ENCODE measurements at regions of chr7 and their contacts with region 1.

Region 1: GRCh38 chr7:142796608-142797385 is 26.0 kb downstream of the PRSS2 start:
- DNase-seq: peak in 2 of 5 donors; percentile 41 to 47
- H3K4me3 ChIP-seq: peak overlapping the region; percentile 84 to 85
- H3K4me3 Mint-ChIP-seq: peak overlapping the region; percentile 93 to 100 (median 99)
- H3K27ac ChIP-seq: peak overlapping the region; percentile 99
- H3K27ac Mint-ChIP-seq: peak overlapping the region; percentile 98 to 100 (median 100)
- H3K4me1 ChIP-seq: peaks cover 68% of the 10 kb centered on the region
- H3K4me1 Mint-ChIP-seq: peaks cover 50 to 79% (median 62%) of the 10 kb centered on the region in 4 donors
- H3K27me3 ChIP-seq: no peaks in the 10 kb centered on the region
- H3K27me3 Mint-ChIP-seq: no peaks in the 10 kb centered on the region

Region 2: DNA sequence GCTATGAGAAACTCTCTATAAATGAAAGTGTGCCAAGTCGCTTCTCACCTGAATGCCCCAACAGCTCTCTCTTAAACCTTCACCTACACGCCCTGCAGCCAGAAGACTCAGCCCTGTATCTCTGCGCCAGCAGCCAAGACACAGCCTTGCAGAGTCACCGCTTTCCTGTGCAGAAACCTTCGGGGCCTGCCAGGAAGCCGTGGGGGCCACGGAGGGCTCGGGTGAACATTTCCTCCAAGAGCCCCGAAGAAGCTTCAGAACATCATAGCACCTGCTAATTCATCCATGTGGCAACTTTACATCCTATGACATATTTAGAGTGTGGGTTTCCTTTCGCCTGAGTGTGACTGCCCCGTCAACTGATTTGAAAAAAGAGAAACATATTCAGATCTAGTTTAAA is 483.3 kb before region 1 on chr7:
- CTCF ChIA-PET with region 1: interaction called, 4 read pairs
- POLR2A ChIA-PET with region 1: interaction called, 44 read pairs
- intact Hi-C with region 1: loop called (anchors 2 kb)
- DNase-seq: peak in 4 of 5 donors; percentile 30 to 61 (median 38)
- H3K4me3 ChIP-seq: no peak overlapping the region
- H3K4me3 Mint-ChIP-seq: peak overlapping the region; percentile 17 to 67 (median 58)
- H3K27ac ChIP-seq: no peak overlapping the region
- H3K27ac Mint-ChIP-seq: peak overlapping the region in 6 of 7 donors; percentile 46 to 88 (median 67)
- H3K4me1 ChIP-seq: peaks cover 12% of the 10 kb centered on the region
- H3K4me1 Mint-ChIP-seq: peaks cover 6 to 27% (median 9%) of the 10 kb centered on the region in 4 donors
- H3K27me3 ChIP-seq: no peaks in the 10 kb centered on the region
- H3K27me3 Mint-ChIP-seq: peaks cover 9 to 14% of the 10 kb centered on the region in 2 donors

Region 3: DNA sequence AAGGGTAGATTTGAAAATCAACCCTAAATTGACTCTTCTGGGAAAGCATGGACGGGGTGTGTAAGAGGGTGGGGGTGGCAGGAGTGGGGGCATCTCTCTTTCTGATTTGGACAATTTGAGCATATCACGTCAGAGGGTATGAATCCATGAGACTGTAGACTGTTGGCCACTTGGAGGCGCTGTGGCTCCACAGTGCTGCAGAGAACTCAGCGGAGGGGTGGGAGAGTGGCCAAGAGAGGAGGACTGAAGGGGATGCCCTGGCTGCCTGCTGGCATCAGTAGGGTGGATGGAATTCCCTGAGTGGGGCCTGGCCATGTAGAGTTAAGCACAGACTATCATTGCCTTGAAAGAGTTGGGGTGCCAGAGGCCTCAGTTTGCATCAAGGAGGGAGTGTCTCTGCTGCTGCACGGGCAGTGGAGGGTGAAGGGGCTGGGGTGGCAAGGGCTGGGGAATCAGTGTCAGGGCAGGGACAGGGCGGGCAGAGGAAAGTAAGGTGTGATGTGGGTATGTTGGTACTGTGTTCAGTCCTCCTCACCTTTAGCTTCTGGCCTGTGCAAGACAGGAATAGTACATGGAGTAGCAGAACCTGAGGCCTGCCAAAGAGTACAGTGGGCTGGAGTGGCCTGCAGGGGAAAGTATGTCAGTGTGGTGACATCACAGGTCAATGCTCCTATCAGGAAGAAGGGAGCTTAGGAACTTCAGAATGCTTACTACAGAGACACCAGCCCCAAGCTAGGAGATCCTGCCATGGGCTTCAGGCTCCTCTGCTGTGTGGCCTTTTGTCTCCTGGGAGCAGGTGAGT is 405.4 kb before region 1 on chr7:
- CTCF ChIA-PET with region 1: interaction called, 3 read pairs
- POLR2A ChIA-PET with region 1: interaction called, 16 read pairs
- intact Hi-C with region 1: no loop called
- DNase-seq: peak in 3 of 5 donors; percentile 17 to 37 (median 21)
- H3K4me3 ChIP-seq: no peak overlapping the region
- H3K4me3 Mint-ChIP-seq: peak overlapping the region; percentile 0 to 68 (median 50)
- H3K27ac ChIP-seq: no peak overlapping the region
- H3K27ac Mint-ChIP-seq: peak overlapping the region in 5 of 7 donors; percentile 2 to 82 (median 48)
- H3K4me1 ChIP-seq: no peaks in the 10 kb centered on the region
- H3K4me1 Mint-ChIP-seq: peaks cover 0 to 6% (median 1%) of the 10 kb centered on the region in 4 donors
- H3K27me3 ChIP-seq: no peaks in the 10 kb centered on the region
- H3K27me3 Mint-ChIP-seq: no peaks in the 10 kb centered on the region

Region 4: DNA sequence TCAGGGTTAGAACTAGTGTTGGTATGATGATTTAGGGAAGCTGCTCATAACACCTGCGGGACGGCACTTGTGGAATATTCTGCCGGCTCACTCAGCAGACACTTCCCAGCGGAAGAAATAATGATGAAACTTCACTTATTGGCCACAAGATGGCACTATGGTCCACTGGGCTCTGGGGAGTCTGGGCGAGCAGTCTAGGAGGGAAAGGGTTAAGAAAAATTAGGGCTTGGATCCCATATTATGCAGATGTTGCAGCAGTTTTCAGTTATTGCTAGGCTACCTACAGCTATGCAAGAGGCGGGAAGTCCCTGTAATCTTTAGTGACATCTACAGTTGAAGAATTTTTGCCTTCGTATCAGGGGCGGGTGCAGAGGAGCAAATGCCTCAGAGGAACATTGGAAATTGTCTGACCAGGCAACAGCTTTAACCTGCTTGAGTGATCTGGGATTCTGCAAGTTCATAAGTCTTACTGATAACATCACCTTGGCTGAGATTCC is 300.2 kb before region 1 on chr7:
- CTCF ChIA-PET with region 1: no interaction called
- POLR2A ChIA-PET with region 1: interaction called, 44 read pairs
- intact Hi-C with region 1: no loop called
- DNase-seq: peak; percentile 33 to 46 (median 36)
- H3K4me3 ChIP-seq: no peak overlapping the region
- H3K4me3 Mint-ChIP-seq: peak overlapping the region; percentile 40 to 75 (median 66)
- H3K27ac ChIP-seq: no peak overlapping the region
- H3K27ac Mint-ChIP-seq: peak overlapping the region; percentile 39 to 86 (median 74)
- H3K4me1 ChIP-seq: peaks cover 30% of the 10 kb centered on the region
- H3K4me1 Mint-ChIP-seq: peaks cover 24 to 51% (median 30%) of the 10 kb centered on the region in 4 donors
- H3K27me3 ChIP-seq: no peaks in the 10 kb centered on the region
- H3K27me3 Mint-ChIP-seq: no peaks in the 10 kb centered on the region

Region 5: DNA sequence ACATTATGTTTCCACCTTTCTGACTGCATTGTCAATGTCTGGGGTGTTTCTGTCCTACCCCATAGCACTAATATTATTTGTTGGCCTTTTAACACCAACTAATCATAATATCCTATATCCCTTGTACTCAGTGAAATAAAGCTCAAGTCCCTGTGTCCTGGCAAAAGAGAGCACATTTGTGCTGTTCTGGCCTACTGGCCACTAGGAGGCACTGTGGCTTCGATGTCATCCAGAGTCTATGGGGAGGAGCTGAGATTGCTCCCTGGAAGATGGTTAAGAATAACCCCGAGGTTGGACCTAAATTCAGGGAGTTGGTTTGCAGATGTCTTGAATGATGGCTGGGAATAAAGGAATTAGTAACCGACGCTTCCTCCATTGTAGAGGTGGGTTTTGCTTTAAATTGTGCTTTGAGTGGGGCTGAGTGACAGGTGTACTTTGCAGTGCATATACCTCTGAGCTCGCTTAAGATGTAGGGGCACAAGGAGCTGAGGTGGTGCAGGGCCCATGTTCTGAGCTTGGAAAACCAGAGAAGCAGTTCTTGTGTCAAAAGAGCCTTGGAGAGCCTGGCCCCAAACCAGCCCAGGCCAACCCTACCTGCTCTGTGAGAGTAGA is 238.7 kb before region 1 on chr7:
- CTCF ChIA-PET with region 1: no interaction called
- POLR2A ChIA-PET with region 1: interaction called, 38 read pairs
- intact Hi-C with region 1: no loop called
- DNase-seq: peak; percentile 31 to 47 (median 41)
- H3K4me3 ChIP-seq: no peak overlapping the region
- H3K4me3 Mint-ChIP-seq: peak overlapping the region in 7 of 8 donors; percentile 17 to 77 (median 66)
- H3K27ac ChIP-seq: no peak overlapping the region
- H3K27ac Mint-ChIP-seq: peak overlapping the region in 4 of 7 donors; percentile 3 to 72 (median 37)
- H3K4me1 ChIP-seq: no peaks in the 10 kb centered on the region
- H3K4me1 Mint-ChIP-seq: peaks cover 0 to 4% (median 2%) of the 10 kb centered on the region in 4 donors
- H3K27me3 ChIP-seq: no peaks in the 10 kb centered on the region
- H3K27me3 Mint-ChIP-seq: peaks cover 2 to 3% of the 10 kb centered on the region in 2 donors

Region 6: DNA sequence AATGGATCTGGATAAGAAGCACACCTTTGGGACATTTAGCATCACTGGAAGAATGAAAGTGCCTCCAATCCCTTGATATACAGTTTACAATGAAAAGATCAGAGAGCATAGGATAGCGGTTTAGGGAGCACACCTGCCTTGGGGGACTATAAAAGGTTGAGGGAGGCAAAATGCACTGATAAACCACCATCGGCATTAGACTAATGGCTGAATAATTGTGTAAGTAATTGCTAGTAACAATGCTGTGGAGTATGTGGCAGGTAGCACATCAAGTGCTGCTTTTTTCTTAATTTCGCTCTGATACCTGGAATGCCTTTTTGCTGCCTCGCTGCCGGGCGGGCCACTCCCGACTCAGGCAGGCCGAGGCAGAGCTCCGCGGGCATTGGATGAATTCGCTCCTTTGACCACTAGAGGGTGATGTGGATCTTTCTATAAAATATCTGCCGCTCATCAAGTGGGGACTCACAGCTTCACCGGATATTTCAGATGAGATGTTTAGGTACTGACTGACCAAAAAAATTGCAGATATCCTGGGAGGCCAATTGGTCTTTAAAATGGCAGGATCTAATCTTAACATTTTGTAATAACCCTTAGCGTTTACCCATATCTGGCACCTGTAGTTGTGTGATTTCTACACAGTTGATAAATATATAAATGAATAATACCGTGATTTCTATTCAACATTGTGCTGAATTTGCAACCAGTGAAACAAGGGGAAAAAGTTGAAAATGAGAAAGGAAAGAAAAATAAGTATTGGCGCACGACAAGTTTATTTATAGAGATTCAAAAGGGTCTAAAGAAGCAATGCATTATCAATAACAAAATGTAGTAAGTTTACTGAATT is 164.3 kb before region 1 on chr7:
- CTCF ChIA-PET with region 1: interaction called, 3 read pairs
- POLR2A ChIA-PET with region 1: interaction called, 120 read pairs
- intact Hi-C with region 1: no loop called
- DNase-seq: peak; percentile 47 to 68 (median 67)
- H3K4me3 ChIP-seq: no peak overlapping the region
- H3K4me3 Mint-ChIP-seq: peak overlapping the region in 4 of 8 donors; percentile 15 to 51 (median 34)
- H3K27ac ChIP-seq: no peak overlapping the region
- H3K27ac Mint-ChIP-seq: peak overlapping the region in 4 of 7 donors; percentile 35 to 82 (median 72)
- H3K4me1 ChIP-seq: peaks cover 3% of the 10 kb centered on the region
- H3K4me1 Mint-ChIP-seq: peaks cover 3 to 15% (median 8%) of the 10 kb centered on the region in 4 donors
- H3K27me3 ChIP-seq: no peaks in the 10 kb centered on the region
- H3K27me3 Mint-ChIP-seq: peaks cover 1% of the 10 kb centered on the region in 2 donors

Region 7: GRCh38 chr7:142754681-142755575 is 41.9 kb before region 1 on chr7:
- CTCF ChIA-PET with region 1: no interaction called
- POLR2A ChIA-PET with region 1: no interaction called
- intact Hi-C with region 1: no loop called
- DNase-seq: no peak
- H3K4me3 ChIP-seq: no peak overlapping the region
- H3K4me3 Mint-ChIP-seq: no peak overlapping the region
- H3K27ac ChIP-seq: no peak overlapping the region
- H3K27ac Mint-ChIP-seq: peak overlapping the region in 1 of 7 donors; percentile 76
- H3K4me1 ChIP-seq: no peaks in the 10 kb centered on the region
- H3K4me1 Mint-ChIP-seq: no peaks in the 10 kb centered on the region
- H3K27me3 ChIP-seq: no peaks in the 10 kb centered on the region
- H3K27me3 Mint-ChIP-seq: no peaks in the 10 kb centered on the region

Region 8: GRCh38 chr7:142833174-142834048 is 36.6 kb after region 1 on chr7:
- CTCF ChIA-PET with region 1: no interaction called
- POLR2A ChIA-PET with region 1: no interaction called
- intact Hi-C with region 1: no loop called
- DNase-seq: no peak
- H3K4me3 ChIP-seq: no peak overlapping the region
- H3K4me3 Mint-ChIP-seq: no peak overlapping the region
- H3K27ac ChIP-seq: no peak overlapping the region
- H3K27ac Mint-ChIP-seq: peak overlapping the region in 2 of 7 donors; percentile 5 to 30
- H3K4me1 ChIP-seq: no peaks in the 10 kb centered on the region
- H3K4me1 Mint-ChIP-seq: peaks cover 6 to 11% (median 6%) of the 10 kb centered on the region in 4 donors
- H3K27me3 ChIP-seq: no peaks in the 10 kb centered on the region
- H3K27me3 Mint-ChIP-seq: no peaks in the 10 kb centered on the region

Region 9: DNA sequence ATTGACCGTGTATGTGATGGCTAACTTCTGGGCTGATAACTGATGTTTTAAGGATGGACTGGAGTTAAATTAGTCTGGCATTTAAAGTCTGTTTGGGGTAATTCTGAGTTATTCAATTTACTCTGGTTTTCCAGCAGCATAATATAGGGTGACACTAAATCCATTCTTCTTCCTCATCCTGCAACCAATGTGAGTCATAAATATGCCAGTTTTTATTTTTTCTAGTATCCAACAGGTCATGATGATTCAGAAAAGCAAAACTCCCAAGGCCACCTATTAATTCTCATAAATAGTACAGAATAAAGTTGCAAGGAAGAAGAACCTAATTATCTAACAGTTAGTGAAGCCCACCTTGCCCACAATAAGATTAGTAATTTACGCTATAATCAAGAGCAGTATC is 50.6 kb after region 1 on chr7:
- CTCF ChIA-PET with region 1: no interaction called
- POLR2A ChIA-PET with region 1: no interaction called
- intact Hi-C with region 1: no loop called
- DNase-seq: no peak
- H3K4me3 ChIP-seq: no peak overlapping the region
- H3K4me3 Mint-ChIP-seq: no peak overlapping the region
- H3K27ac ChIP-seq: no peak overlapping the region
- H3K27ac Mint-ChIP-seq: no peak overlapping the region
- H3K4me1 ChIP-seq: no peaks in the 10 kb centered on the region
- H3K4me1 Mint-ChIP-seq: no peaks in the 10 kb centered on the region
- H3K27me3 ChIP-seq: no peaks in the 10 kb centered on the region
- H3K27me3 Mint-ChIP-seq: peaks cover 6 to 8% of the 10 kb centered on the region in 2 donors

Region 10: GRCh38 chr7:143008007-143008901 is 211.5 kb after region 1 on chr7:
- CTCF ChIA-PET with region 1: no interaction called
- POLR2A ChIA-PET with region 1: no interaction called
- intact Hi-C with region 1: no loop called
- DNase-seq: peak; percentile 69 to 80 (median 76)
- H3K4me3 ChIP-seq: no peak overlapping the region
- H3K4me3 Mint-ChIP-seq: peak overlapping the region in 1 of 8 donors; percentile 15
- H3K27ac ChIP-seq: no peak overlapping the region
- H3K27ac Mint-ChIP-seq: peak overlapping the region in 2 of 7 donors; percentile 5 to 65
- H3K4me1 ChIP-seq: peaks cover 3% of the 10 kb centered on the region
- H3K4me1 Mint-ChIP-seq: peaks cover 4 to 6% (median 6%) of the 10 kb centered on the region in 4 donors
- H3K27me3 ChIP-seq: no peaks in the 10 kb centered on the region
- H3K27me3 Mint-ChIP-seq: peaks cover 6 to 7% of the 10 kb centered on the region in 2 donors